IMR-90 (cell line): ENCODE measurements at regions of chr5 and their contacts with region 1.

Region 1: DNA sequence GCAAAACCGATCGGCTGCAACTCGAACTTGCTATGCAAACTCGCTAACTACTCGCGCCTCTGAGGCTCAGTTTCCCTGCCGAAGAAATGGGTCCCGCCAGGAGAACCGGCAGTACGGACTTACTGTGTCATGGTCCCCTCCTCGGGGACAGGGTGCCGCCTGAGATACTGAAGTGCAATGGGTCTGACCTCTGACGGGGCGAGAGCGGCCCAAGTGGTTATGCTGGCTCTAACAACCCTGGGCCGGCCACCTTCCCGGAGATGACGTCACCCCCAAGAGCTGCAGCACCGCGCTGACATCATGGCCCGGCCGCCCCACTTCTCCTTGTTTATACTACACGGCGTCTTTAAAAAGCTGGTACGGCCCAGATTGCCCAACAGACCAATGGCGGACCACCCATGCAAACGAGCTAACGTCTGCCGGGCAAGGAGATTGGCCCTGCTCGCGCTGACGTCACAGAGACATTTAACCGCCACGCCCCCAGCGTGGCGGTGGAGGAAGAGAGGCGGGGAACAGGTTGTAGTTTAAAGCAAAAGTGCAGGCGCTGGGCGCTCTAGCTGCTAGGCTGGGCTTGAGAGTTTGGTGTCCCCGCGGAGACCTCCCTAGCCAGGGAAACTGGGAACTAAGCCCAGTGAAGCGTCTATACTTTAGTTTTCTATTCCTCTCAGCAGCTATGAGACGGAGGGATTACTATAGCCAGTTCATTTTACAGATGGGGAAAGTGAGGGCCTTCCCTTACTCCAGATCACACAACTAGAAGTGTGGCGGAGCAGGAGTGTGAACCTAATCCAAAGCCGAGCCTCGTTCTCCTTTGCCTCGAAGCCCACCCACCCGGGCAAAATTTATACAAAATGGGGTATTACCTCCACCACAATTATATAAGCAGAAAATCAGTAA is 654 bp upstream of the RNF44 start:
- DNase-seq: peak; percentile 100
- ATAC-seq: peak; percentile 79
- H3K4me3 ChIP-seq: peak overlapping the region; percentile 66
- H3K27ac ChIP-seq: peak overlapping the region; percentile 78
- H3K4me1 ChIP-seq: peaks cover 27% of the 10 kb centered on the region
- H3K27me3 ChIP-seq: no peaks in the 10 kb centered on the region
- CTCF ChIP-seq: 0 out of 2 replicates have a peak, but pooled peaks have one; percentile 3
- POLR2A ChIP-seq: no peak; the same call in 1 of the 2 replicates
- RAD21 ChIP-seq: no peak

Region 2: DNA sequence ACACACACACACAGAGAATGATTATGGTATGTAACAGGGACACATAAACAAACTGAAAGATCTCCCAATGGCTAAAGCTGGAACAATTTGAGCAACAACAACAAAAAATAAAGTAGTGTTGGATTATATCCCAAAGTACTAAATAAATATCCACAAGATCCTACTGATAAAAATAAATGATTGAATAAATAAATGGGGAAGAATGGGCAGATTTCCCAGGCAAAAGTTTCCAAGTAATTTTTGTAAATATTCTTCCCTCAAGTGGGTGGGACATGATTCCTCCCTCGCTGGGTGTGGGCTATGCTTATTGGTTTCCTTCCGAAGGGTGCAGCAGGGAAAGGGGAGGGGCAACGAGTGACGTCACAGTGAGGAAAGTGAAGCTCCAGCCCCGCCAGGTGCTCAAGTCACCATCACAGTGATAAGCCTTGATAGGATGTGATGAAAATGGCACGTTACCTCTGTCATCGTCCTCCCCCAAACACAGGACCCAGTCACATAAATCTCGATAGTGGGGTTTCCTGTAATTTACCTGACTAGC is 1389.2 kb before region 1 on chr5:
- CTCF ChIA-PET with region 1: no interaction called
- POLR2A ChIA-PET with region 1: no interaction called
- dilution Hi-C with region 1: no loop called
- in situ Hi-C with region 1: no loop called
- intact Hi-C with region 1: no loop called
- DNase-seq: no peak
- ATAC-seq: no peak
- H3K4me3 ChIP-seq: no peak overlapping the region
- H3K27ac ChIP-seq: no peak overlapping the region
- H3K4me1 ChIP-seq: no peaks in the 10 kb centered on the region
- H3K27me3 ChIP-seq: no peaks in the 10 kb centered on the region
- CTCF ChIP-seq: no peak
- POLR2A ChIP-seq: no peak
- RAD21 ChIP-seq: no peak

Region 3: GRCh38 chr5:176447982-176448608 is 89.8 kb before region 1 on chr5 and contains the start of gene FAF2:
- CTCF ChIA-PET with region 1: interaction called, 4 read pairs
- POLR2A ChIA-PET with region 1: no interaction called
- dilution Hi-C with region 1: no loop called
- in situ Hi-C with region 1: no loop called
- intact Hi-C with region 1: loop called (anchors 2 kb)
- DNase-seq: peak; percentile 99
- ATAC-seq: peak; percentile 89
- H3K4me3 ChIP-seq: peak within 1 kb of the TSS; percentile 74
- H3K27ac ChIP-seq: peak within 1 kb of the TSS; percentile 92
- H3K4me1 ChIP-seq: peaks cover 3% of the 10 kb centered on the region
- H3K27me3 ChIP-seq: no peaks in the 10 kb centered on the region
- CTCF ChIP-seq: peak; percentile 99
- POLR2A ChIP-seq: peak; percentile 96
- RAD21 ChIP-seq: peak; percentile 32; the same call in 1 of the 2 replicates
- total RNA-seq, gene FAF2: 47.0 and 50.3 TPM in 2 replicates

Region 4: DNA sequence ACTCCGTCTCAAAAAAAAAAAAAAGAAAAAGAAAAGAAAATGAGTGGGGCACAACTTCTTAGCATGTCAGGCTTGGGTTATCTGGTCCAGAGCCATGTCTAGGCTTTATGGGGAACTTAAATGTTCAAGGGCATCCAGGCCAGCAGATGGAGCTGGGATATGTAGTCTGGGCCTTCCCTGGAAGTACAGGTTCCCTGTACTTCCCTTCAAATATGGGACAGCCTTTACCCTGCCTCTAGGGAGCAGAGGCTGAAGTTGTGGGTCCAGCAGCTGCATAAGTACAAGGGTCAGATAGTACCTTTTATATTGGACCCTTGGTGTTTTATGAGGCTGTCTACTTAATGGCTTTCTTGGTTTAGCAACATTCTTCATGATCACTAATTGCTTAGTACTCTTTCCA is 47.6 kb before region 1 on chr5:
- CTCF ChIA-PET with region 1: no interaction called
- POLR2A ChIA-PET with region 1: no interaction called
- dilution Hi-C with region 1: no loop called
- in situ Hi-C with region 1: no loop called
- intact Hi-C with region 1: no loop called
- DNase-seq: no peak
- ATAC-seq: no peak
- H3K4me3 ChIP-seq: no peak overlapping the region
- H3K27ac ChIP-seq: peak overlapping the region; percentile 44; the same call in 1 of the 2 replicates
- H3K4me1 ChIP-seq: peaks cover 10% of the 10 kb centered on the region
- H3K27me3 ChIP-seq: no peaks in the 10 kb centered on the region
- CTCF ChIP-seq: no peak
- POLR2A ChIP-seq: no peak
- RAD21 ChIP-seq: no peak

Region 5: GRCh38 chr5:176619203-176619568 is 81.3 kb after region 1 on chr5:
- CTCF ChIA-PET with region 1: no interaction called
- POLR2A ChIA-PET with region 1: no interaction called
- dilution Hi-C with region 1: no loop called
- in situ Hi-C with region 1: no loop called
- intact Hi-C with region 1: loop called (anchors 2 kb)
- DNase-seq: peak; percentile 86
- ATAC-seq: peak; percentile 95
- H3K4me3 ChIP-seq: no peak overlapping the region
- H3K27ac ChIP-seq: no peak overlapping the region
- H3K4me1 ChIP-seq: peaks cover 27% of the 10 kb centered on the region
- H3K27me3 ChIP-seq: peaks cover 32% of the 10 kb centered on the region
- CTCF ChIP-seq: peak; percentile 72
- POLR2A ChIP-seq: no peak
- RAD21 ChIP-seq: peak; percentile 80

Region 6: DNA sequence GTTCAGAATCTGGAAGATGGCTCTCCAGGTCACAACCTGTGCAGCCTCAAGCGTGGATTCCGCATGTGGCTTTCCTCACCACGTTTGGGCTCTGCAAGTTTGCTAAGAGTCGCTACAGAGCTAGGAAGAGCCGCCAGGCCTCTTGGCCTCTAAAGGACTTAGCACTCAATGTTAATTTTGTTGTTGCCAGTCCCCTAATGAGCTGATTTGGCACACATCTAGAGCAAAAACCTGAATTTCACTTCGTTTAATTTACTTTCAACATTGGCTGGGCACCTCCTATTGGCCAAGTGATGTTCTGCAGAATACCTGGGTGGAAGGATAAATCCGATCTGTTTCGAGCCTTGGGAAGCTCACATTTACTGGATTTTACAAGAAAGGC is 206.7 kb after region 1 on chr5:
- CTCF ChIA-PET with region 1: no interaction called
- POLR2A ChIA-PET with region 1: no interaction called
- dilution Hi-C with region 1: no loop called
- in situ Hi-C with region 1: no loop called
- intact Hi-C with region 1: no loop called
- DNase-seq: no peak
- ATAC-seq: no peak
- H3K4me3 ChIP-seq: no peak overlapping the region
- H3K27ac ChIP-seq: no peak overlapping the region
- H3K4me1 ChIP-seq: no peaks in the 10 kb centered on the region
- H3K27me3 ChIP-seq: peaks cover 83% of the 10 kb centered on the region
- CTCF ChIP-seq: peak; percentile 17; the same call in 1 of the 2 replicates
- POLR2A ChIP-seq: no peak
- RAD21 ChIP-seq: no peak